ENCODE measurements at regions of chr19 and their contacts with region 1.

Region 1: GRCh38 chr19:38209671-38210457 is 14.2 kb downstream of the DPF1 start:
- DNase-seq: peak; percentile 90
- ATAC-seq: peak; percentile 84

Region 2: GRCh38 chr19:38184815-38185214 is 25.0 kb before region 1 on chr19:
- intact Hi-C with region 1: loop called (anchors 2 kb)
- DNase-seq: no peak
- ATAC-seq: peak; percentile 35